ENCODE measurements at regions of chr1 and their contacts with region 1.

Region 1: GRCh38 chr1:165367375-165367993 is 11.0 kb upstream of the LMX1A start:
- DNase-seq: peak; percentile 53
- ATAC-seq: peak; percentile 77; the same call in 1 of the 2 replicates
- H3K4me3 ChIP-seq: no peak overlapping the region
- H3K27ac ChIP-seq: no peak overlapping the region
- H3K4me1 ChIP-seq: no peaks in the 10 kb centered on the region
- H3K27me3 ChIP-seq: peaks cover 8% of the 10 kb centered on the region; the same call in 1 of the 2 replicates
- CTCF ChIP-seq: peak; percentile 95

Region 2: GRCh38 chr1:165114022-165114888 is 253.2 kb before region 1 on chr1:
- CTCF ChIA-PET with region 1: interaction called, 3 read pairs
- POLR2A ChIA-PET with region 1: no interaction called
- in situ Hi-C with region 1: no loop called
- intact Hi-C with region 1: loop called (anchors 1 kb)
- DNase-seq: peak; percentile 61
- ATAC-seq: peak; percentile 50
- H3K4me3 ChIP-seq: no peak overlapping the region
- H3K27ac ChIP-seq: no peak overlapping the region
- H3K4me1 ChIP-seq: no peaks in the 10 kb centered on the region; the same call in 1 of the 2 replicates
- H3K27me3 ChIP-seq: no peaks in the 10 kb centered on the region; the same call in none of the 2 replicates
- CTCF ChIP-seq: peak; percentile 88

Region 3: GRCh38 chr1:165129568-165130164 is 237.8 kb before region 1 on chr1:
- CTCF ChIA-PET with region 1: interaction called, 11 read pairs
- POLR2A ChIA-PET with region 1: no interaction called
- in situ Hi-C with region 1: no loop called
- intact Hi-C with region 1: no loop called
- DNase-seq: no peak
- ATAC-seq: peak; percentile 87
- H3K4me3 ChIP-seq: no peak overlapping the region
- H3K27ac ChIP-seq: no peak overlapping the region
- H3K4me1 ChIP-seq: no peaks in the 10 kb centered on the region
- H3K27me3 ChIP-seq: peaks cover 24% of the 10 kb centered on the region
- CTCF ChIP-seq: peak; percentile 81

Region 4: DNA sequence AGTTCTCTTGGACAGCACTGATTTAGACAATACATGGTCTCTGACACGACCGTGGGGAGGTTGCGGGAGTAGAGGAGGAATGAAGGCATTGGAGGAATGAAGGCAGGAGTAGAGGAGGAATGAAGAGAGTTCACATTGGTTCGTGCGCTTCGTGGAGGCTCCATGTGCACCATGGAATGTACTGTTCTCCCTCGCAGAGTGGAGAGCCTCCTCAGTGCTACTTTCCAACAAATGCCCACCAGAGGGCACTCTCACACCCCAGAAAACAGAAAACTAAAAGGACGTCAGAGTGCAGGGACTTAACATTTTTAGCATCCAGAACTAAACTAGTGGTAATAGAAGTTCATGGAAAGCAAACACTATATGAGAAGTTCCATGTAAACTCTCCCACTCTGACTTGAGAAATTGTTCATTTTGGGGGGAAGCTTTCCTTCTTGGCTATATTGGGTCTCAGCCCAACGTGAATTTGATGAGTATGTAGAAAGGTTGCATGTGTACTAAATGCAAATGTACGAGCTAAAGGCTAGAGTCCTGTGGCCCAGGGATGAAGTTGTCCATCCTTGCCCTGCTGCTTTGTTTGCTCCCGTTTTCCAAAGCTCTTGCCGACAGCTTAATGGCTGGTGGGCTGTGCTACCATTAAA is 222.6 kb before region 1 on chr1:
- CTCF ChIA-PET with region 1: no interaction called
- POLR2A ChIA-PET with region 1: no interaction called
- in situ Hi-C with region 1: no loop called
- intact Hi-C with region 1: loop called (anchors 2 kb)
- DNase-seq: peak; percentile 38
- ATAC-seq: peak; percentile 94
- H3K4me3 ChIP-seq: no peak overlapping the region
- H3K27ac ChIP-seq: no peak overlapping the region
- H3K4me1 ChIP-seq: no peaks in the 10 kb centered on the region
- H3K27me3 ChIP-seq: no peaks in the 10 kb centered on the region; the same call in none of the 2 replicates
- CTCF ChIP-seq: peak; percentile 87

Region 5: GRCh38 chr1:165257969-165258459 is 109.5 kb before region 1 on chr1:
- CTCF ChIA-PET with region 1: interaction called, 3 read pairs
- POLR2A ChIA-PET with region 1: no interaction called
- in situ Hi-C with region 1: no loop called
- intact Hi-C with region 1: loop called (anchors 2 kb)
- DNase-seq: peak; percentile 20
- ATAC-seq: no peak; the same call in 1 of the 2 replicates
- H3K4me3 ChIP-seq: no peak overlapping the region
- H3K27ac ChIP-seq: no peak overlapping the region
- H3K4me1 ChIP-seq: no peaks in the 10 kb centered on the region
- H3K27me3 ChIP-seq: 0 out of 2 replicates have a peak, but pooled peaks cover 3% of the 10 kb centered on the region
- CTCF ChIP-seq: peak; percentile 76

Region 6: DNA sequence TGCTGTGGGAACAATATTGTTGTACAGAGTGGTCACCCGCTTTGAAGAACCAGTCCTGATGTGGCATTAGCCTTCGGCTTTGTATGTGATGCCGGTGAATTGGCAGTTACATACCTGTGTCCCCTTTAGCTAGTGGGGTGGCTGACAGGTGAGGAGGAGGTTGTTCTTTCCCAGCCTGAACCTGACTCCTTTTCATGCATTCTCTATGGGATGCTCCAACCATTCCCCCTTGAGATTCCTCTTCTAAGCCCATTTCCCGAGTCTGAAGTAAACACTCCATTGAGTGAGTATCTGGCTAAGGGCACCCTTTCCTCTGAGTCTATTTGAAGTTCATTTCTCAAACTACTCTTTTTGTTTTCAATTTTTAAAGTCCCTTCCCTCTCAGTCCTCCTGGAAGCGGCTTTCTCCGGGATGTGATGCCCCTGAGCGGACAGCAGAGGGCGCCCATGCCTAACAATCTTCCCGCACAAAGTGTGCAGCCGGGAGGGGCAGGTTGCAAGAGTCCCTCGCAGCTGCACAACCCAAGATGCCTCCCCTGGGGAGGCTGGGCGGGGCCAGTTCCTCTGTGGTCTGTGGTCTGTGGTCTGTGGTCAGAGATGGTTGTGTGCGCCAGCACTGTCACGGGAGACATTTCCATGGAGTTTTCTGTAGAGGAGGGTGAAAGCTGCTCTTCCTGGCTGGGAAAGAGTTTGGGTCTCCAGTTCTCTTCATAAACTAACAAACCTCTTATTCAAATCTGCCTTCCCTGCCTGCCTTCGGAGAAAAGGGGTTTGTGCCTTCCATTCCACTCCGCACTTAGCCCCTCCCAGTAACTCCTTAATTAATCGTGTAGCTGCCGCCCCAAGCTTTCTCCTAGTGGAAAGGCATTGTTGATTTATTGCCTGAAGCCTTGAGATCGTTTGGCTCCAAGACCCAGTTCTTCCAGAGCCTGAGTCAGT is 25.4 kb after region 1 on chr1:
- CTCF ChIA-PET with region 1: interaction called, 11 read pairs
- POLR2A ChIA-PET with region 1: no interaction called
- in situ Hi-C with region 1: no loop called
- intact Hi-C with region 1: no loop called
- DNase-seq: no peak
- ATAC-seq: peak; percentile 95
- H3K4me3 ChIP-seq: no peak overlapping the region
- H3K27ac ChIP-seq: no peak overlapping the region
- H3K4me1 ChIP-seq: peaks cover 4% of the 10 kb centered on the region; the same call in 1 of the 2 replicates
- H3K27me3 ChIP-seq: peaks cover 8% of the 10 kb centered on the region; the same call in 1 of the 2 replicates
- CTCF ChIP-seq: peak; percentile 95

Region 7: GRCh38 chr1:165871311-165872067 is 504.0 kb after region 1 on chr1:
- CTCF ChIA-PET with region 1: no interaction called
- POLR2A ChIA-PET with region 1: no interaction called
- in situ Hi-C with region 1: no loop called
- intact Hi-C with region 1: no loop called
- DNase-seq: no peak
- ATAC-seq: no peak; the same call in 1 of the 2 replicates
- H3K4me3 ChIP-seq: no peak overlapping the region
- H3K27ac ChIP-seq: no peak overlapping the region
- H3K4me1 ChIP-seq: peaks cover 8% of the 10 kb centered on the region; the same call in 1 of the 2 replicates
- H3K27me3 ChIP-seq: no peaks in the 10 kb centered on the region
- CTCF ChIP-seq: peak; percentile 22; the same call in 1 of the 2 replicates